Endothelial cell of umbilical vein (primary cell): ENCODE measurements at regions of chr22 and their contacts with region 1.

Region 1: GRCh38 chr22:37696657-37697537 is at the start of gene TRIOBP:
- DNase-seq: peak; percentile 96
- H3K4me3 ChIP-seq: no peak within 1 kb of the TSS
- H3K27ac ChIP-seq: no peak within 1 kb of the TSS
- H3K4me1 ChIP-seq: peaks cover 11% of the 10 kb centered on the region
- H3K27me3 ChIP-seq: no peaks in the 10 kb centered on the region
- CTCF ChIP-seq: peak; percentile 56 to 78
- POLR2A ChIP-seq: no peak
- total RNA-seq, gene TRIOBP: 104 TPM in 2 replicates

Region 2: GRCh38 chr22:37538590-37539357 is 158.1 kb before region 1 on chr22:
- CTCF ChIA-PET with region 1: no interaction called
- POLR2A ChIA-PET with region 1: no interaction called
- dilution Hi-C with region 1: no loop called
- intact Hi-C with region 1: no loop called
- DNase-seq: peak; percentile 91
- H3K4me3 ChIP-seq: no peak overlapping the region
- H3K27ac ChIP-seq: no peak overlapping the region
- H3K4me1 ChIP-seq: peaks cover 3% of the 10 kb centered on the region
- H3K27me3 ChIP-seq: no peaks in the 10 kb centered on the region
- CTCF ChIP-seq: peak; percentile 95 to 98
- POLR2A ChIP-seq: no peak

Region 3: DNA sequence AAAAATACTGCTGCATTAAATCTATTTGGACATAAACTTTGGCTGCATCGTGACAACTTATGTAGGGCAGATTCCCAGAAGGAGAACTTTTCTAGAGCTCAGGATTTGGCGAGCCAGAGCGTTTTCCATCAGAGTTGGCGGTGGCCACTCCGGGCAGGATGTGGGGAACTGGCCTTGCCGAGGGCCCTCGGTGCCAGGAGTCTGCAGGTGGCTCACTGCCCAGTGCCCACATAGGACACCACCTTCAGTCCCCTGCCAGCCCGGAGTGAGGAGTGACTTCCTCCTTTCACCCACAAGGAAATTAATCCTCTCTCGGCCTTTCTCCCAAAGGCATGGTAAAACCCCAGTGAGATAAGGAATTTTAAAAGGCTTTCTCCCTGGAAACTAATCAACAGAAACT is 115.4 kb before region 1 on chr22:
- CTCF ChIA-PET with region 1: no interaction called
- POLR2A ChIA-PET with region 1: no interaction called
- dilution Hi-C with region 1: no loop called
- intact Hi-C with region 1: no loop called
- DNase-seq: no peak
- H3K4me3 ChIP-seq: no peak overlapping the region
- H3K27ac ChIP-seq: no peak overlapping the region
- H3K4me1 ChIP-seq: no peaks in the 10 kb centered on the region
- H3K27me3 ChIP-seq: peaks cover 4% of the 10 kb centered on the region in 2 experiments
- CTCF ChIP-seq: no peak
- POLR2A ChIP-seq: no peak

Region 4: GRCh38 chr22:37686002-37686982 is 10.6 kb before region 1 on chr22 and contains the start of gene NOL12:
- CTCF ChIA-PET with region 1: interaction called, 4 read pairs
- POLR2A ChIA-PET with region 1: interaction called, 3 read pairs
- dilution Hi-C with region 1: no loop called
- intact Hi-C with region 1: loop called (anchors 1 kb)
- DNase-seq: peak; percentile 92
- H3K4me3 ChIP-seq: peak within 1 kb of the TSS; percentile 44 to 99 (median 82)
- H3K27ac ChIP-seq: peak within 1 kb of the TSS; percentile 74
- H3K4me1 ChIP-seq: peaks cover 5% of the 10 kb centered on the region
- H3K27me3 ChIP-seq: no peaks in the 10 kb centered on the region
- CTCF ChIP-seq: no peak
- POLR2A ChIP-seq: peak; percentile 90
- total RNA-seq, gene NOL12: 29.1 and 31.5 TPM in 2 replicates

Region 5: GRCh38 chr22:37745548-37746365 is 48.9 kb after region 1 on chr22:
- CTCF ChIA-PET with region 1: interaction called, 3 read pairs
- POLR2A ChIA-PET with region 1: no interaction called
- dilution Hi-C with region 1: no loop called
- intact Hi-C with region 1: loop called (anchors 1 kb)
- DNase-seq: peak; percentile 88
- H3K4me3 ChIP-seq: peak overlapping the region; percentile 63 to 82 (median 75)
- H3K27ac ChIP-seq: peak overlapping the region; percentile 89
- H3K4me1 ChIP-seq: peaks cover 47% of the 10 kb centered on the region
- H3K27me3 ChIP-seq: no peaks in the 10 kb centered on the region
- CTCF ChIP-seq: no peak
- POLR2A ChIP-seq: peak; percentile 39